HCT116 (cell line): ENCODE measurements at regions of chr1 and their contacts with region 1.

Region 1: DNA sequence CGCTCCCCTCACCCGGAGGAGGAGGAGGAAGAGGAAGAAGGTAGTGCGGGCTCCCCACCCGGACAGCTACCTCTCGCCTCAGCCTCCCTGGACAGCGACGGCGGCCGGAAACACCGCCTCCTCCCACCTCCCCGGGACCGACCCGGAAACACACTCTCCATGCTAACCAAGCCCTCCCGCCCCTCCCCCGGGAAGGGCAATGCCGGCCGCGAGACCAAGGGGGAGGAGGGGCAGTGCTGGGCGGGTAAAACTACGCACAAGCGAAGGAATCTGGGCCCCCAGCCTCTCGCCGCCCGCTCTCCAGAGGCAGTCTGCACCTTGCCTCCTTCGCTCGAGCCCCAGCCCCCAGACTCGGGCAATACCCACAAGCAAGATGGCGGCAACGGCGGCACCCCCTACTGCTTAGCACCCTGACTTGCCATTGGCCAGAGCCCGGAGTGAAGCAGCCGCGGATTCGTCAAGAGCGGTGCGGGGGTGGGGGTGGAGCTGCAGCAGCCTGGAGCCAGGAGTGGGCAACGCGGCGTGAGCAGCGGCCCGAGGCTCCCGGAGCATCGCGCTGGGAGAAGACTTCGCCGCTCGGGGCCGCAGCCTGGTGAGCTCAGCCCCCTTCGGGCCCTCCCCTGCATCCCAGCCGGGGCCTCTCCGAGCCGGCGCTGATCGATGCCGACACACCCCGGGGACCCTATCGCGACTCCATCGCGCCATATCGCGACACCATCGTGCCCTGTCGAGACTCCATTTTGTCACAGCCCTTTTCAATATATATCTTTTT is at the starts of genes KIAA0319L and NCDN:
- DNase-seq: peak; percentile 93
- ATAC-seq: peak; percentile 90
- H3K4me3 ChIP-seq: peak within 1 kb of the TSS; percentile 78 to 89
- H3K27ac ChIP-seq: peak within 1 kb of the TSS; percentile 84
- H3K4me1 ChIP-seq: peaks cover 8 to 19% of the 10 kb centered on the region in 2 experiments; a peak in 3 of 4 replicates
- H3K27me3 ChIP-seq: no peaks in the 10 kb centered on the region
- CTCF ChIP-seq: no peak
- POLR2A ChIP-seq: peak; percentile 50
- RAD21 ChIP-seq: no peak
- total RNA-seq, gene KIAA0319L: 35.6 TPM
- total RNA-seq, gene NCDN: 24.5 TPM

Region 2: DNA sequence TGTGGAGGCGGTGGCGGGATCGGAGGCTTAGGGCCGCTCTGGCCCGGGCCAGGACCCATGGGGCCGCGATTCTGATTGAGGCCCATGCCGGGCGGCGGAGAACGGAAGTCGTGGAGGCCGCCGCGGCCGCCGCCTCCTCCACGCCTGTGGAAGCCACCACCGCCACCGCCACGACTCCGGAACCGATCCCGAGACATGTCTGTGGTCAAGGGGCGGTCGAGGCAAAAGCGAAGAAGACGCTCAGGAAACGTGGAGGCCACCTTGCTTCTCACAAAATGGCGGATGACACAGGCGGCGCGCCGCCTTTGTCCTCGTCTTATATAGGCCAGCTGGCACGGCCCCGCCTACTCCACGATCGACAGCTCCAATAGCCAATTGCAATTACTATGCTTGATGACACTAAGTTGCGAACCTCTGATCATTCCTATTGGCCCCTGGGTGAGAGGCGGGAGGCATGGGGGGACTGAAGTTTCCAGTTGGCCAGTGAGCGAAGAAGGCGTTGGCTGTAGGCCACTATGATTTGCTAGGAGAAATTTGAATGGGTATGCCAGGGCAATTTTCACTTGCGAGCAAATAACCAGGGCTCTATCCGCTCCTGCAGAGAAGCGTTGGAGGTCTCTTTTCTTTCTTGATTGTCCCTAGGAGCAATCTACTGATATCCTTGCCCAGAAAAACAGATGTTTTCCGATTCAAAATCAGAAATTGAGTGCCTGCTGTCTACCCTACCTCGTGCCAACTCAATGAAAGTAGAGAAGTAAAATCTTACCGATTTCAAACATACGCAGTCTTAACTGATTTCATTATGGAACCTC is 364.4 kb before region 1 on chr1 and contains the start of gene SFPQ:
- CTCF ChIA-PET with region 1: no interaction called
- POLR2A ChIA-PET with region 1: interaction called, 3 read pairs
- RAD21 ChIA-PET with region 1: no interaction called
- intact Hi-C with region 1: loop called (anchors 2 kb)
- DNase-seq: peak; percentile 98
- ATAC-seq: peak; percentile 91
- H3K4me3 ChIP-seq: peak within 1 kb of the TSS; percentile 69 to 85
- H3K27ac ChIP-seq: peak within 1 kb of the TSS; percentile 97
- H3K4me1 ChIP-seq: peaks cover 8 to 25% of the 10 kb centered on the region in 2 experiments
- H3K27me3 ChIP-seq: no peaks in the 10 kb centered on the region
- CTCF ChIP-seq: no peak
- POLR2A ChIP-seq: peak; percentile 96
- RAD21 ChIP-seq: no peak
- total RNA-seq, gene SFPQ: 327 TPM